ENCODE measurements at regions of chr10 and their contacts with region 1.

Region 1: GRCh38 chr10:23438550-23439441 is at the start of gene OTUD1:
- DNase-seq: peak; percentile 97 to 99 (median 97)
- ATAC-seq: peak; percentile 90 to 96 (median 92)
- H3K4me3 ChIP-seq: peak within 1 kb of the TSS; percentile 73 to 95 (median 88)
- H3K27ac ChIP-seq: peak within 1 kb of the TSS; percentile 90 to 99 (median 96)
- H3K4me1 ChIP-seq: peaks cover 4 to 38% (median 24%) of the 10 kb centered on the region in 12 donors
- H3K27me3 ChIP-seq: no peaks in the 10 kb centered on the region
- CTCF ChIP-seq: peak in 6 of 12 donors; percentile 6 to 27 (median 12)
- POLR2A ChIP-seq: peak in 1 of 2 donors; percentile 93
- total RNA-seq, gene OTUD1: 8.7 to 48.3 (median 19.7) TPM

Region 2: GRCh38 chr10:22244001-22244400 is 1194.8 kb before region 1 on chr10:
- intact Hi-C with region 1: loop called in 1 of 10 experiments (anchors 10 kb)
- DNase-seq: no peak
- ATAC-seq: no peak
- H3K4me3 ChIP-seq: no peak overlapping the region
- H3K27ac ChIP-seq: no peak overlapping the region
- H3K4me1 ChIP-seq: peaks cover 0 to 9% (median 0%) of the 10 kb centered on the region in 12 donors
- H3K27me3 ChIP-seq: peaks cover 0 to 9% (median 0%) of the 10 kb centered on the region in 9 donors
- CTCF ChIP-seq: no peak
- POLR2A ChIP-seq: no peak

Region 3: DNA sequence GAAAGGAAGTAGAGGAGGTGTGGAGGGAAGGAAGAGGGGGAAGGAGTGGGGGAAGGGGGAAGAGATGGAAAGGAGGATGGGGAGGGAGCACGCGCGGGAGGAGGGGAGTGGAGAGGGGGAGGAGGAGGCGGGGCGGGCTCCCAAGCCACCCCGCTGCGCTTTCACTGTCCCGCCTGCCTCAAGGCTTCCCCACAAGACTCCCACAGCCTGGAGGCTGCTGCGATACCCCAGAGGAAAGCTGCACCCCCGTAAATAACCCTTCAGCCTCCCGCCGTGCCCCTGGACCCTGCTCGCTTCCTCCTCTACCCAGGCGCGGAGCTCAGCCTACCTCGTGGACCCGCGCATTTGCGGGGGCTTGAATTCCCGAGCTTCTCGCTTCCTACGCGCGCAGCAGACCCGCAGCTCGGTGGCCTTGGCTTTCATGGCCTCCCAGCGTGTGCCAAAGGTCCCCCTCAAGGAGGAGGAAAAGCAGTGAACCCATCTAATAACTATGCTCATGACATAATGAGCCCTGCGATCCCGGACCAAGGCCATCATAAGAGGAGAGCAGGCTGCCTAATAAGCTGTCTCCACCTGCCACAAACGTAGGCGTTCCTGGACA is 94.5 kb before region 1 on chr10 and contains the start of gene C10orf67:
- intact Hi-C with region 1: loop called in 6 of 10 experiments (anchors 2 to 10 kb)
- DNase-seq: peak; percentile 38 to 71 (median 60)
- ATAC-seq: peak; percentile 69 to 82 (median 73)
- H3K4me3 ChIP-seq: peak within 1 kb of the TSS; percentile 9 to 72 (median 58)
- H3K27ac ChIP-seq: peak within 1 kb of the TSS; percentile 7 to 87 (median 78)
- H3K4me1 ChIP-seq: peaks cover 0 to 40% (median 18%) of the 10 kb centered on the region in 12 donors
- H3K27me3 ChIP-seq: peaks cover 0 to 24% (median 0%) of the 10 kb centered on the region in 9 donors
- CTCF ChIP-seq: no peak
- POLR2A ChIP-seq: peak in 1 of 2 donors; percentile 33
- total RNA-seq, gene C10orf67: 0.12 to 0.75 (median 0.43) TPM

Region 4: DNA sequence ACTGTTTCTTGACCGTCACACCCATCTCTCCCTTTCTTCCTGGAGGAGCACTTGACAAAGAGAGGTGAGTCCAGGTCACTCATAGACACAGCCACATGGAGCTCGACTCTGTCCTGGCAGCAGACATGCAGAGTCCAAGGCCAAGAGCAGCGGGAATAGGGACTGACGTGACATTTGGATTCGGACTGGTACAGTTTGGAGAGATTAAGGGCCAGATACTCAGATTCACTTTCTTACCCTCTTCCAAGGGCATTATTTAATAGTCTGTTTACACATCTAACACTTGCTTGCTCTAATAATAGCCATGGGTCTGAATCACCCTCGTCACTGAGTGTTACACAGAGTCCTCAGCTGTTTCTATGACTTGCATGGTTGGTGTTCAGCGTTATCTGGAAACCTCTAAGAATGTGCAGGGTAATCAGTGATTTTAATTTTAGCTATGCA is 39.1 kb before region 1 on chr10:
- intact Hi-C with region 1: loop called in 1 of 10 experiments (anchors 2 kb)
- DNase-seq: peak in 4 of 5 donors; percentile 45 to 86 (median 65)
- ATAC-seq: peak; percentile 94 to 98 (median 96)
- H3K4me3 ChIP-seq: no peak overlapping the region
- H3K27ac ChIP-seq: peak overlapping the region; percentile 19 to 90 (median 74)
- H3K4me1 ChIP-seq: peaks cover 0 to 23% (median 6%) of the 10 kb centered on the region in 12 donors
- H3K27me3 ChIP-seq: no peaks in the 10 kb centered on the region
- CTCF ChIP-seq: no peak
- POLR2A ChIP-seq: no peak

Region 5: GRCh38 chr10:23656735-23657134 is 217.9 kb after region 1 on chr10:
- intact Hi-C with region 1: no loop called
- DNase-seq: no peak
- ATAC-seq: no peak
- H3K4me3 ChIP-seq: no peak overlapping the region
- H3K27ac ChIP-seq: no peak overlapping the region
- H3K4me1 ChIP-seq: no peaks in the 10 kb centered on the region
- H3K27me3 ChIP-seq: peaks cover 0 to 11% (median 0%) of the 10 kb centered on the region in 9 donors
- CTCF ChIP-seq: peak in 11 of 12 donors; percentile 21 to 55 (median 45)
- POLR2A ChIP-seq: no peak